Activated T-helper 1 cell treated with anti-CD3 and anti-CD28 coated beads, Interleukin-12 subunit alpha, Interleukin-12 subunit beta, Interleukin-2, Interleukin-4 antibody, amounts not matched to agents 30 ng/mL and 10 ng/mL and 1 ng/mL, durations not matched to agents 14 hours and 24 hours and 36 hours (primary cell): ENCODE measurements at regions of chr16 and their contacts with region 1.

Region 1: DNA sequence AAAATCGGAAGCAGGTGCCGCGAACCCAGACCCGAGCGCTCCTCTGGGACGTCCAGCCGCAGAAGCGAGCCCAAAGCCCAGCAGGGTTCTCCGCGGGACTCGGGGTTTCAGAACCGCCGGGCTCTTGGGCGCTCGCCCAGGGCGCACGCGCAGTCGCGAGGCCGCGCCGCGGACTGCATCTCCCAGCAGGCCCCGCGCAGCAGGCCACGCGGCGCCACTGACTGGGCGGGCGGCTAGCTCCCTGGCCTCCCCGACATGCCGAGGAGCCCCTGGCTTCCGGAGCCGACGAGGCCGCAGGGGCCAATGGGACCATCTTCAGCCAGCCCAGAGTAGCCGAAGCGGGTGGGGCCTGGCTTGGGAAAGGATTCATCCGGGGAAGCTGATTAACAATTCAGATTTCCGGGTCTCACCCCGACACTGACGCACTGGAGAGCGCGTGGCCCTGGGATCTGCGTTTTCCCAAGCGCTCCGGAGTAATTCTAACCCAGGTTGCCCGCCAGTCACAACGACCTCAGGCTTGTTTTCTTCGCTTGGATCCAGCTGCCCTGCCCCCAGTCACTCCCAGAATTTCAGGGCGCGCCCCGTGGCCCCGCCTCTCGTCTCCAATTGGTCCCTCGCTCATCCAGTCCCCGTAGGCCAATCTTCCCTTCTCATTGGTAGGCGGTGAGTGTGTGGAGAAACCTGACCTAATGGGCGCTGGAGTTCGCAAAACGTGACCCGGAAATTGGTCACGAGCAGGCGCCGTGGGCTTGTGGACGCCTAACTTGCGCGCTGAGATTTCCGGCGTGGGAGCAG is at the start of gene ZNF263:
- DNase-seq: peak; percentile 90
- H3K4me3 Mint-ChIP-seq: peak within 1 kb of the TSS; percentile 96
- H3K27ac Mint-ChIP-seq: peak within 1 kb of the TSS; percentile 97
- H3K4me1 Mint-ChIP-seq: peaks cover 23% of the 10 kb centered on the region
- H3K27me3 Mint-ChIP-seq: no peaks in the 10 kb centered on the region
- total RNA-seq, gene ZNF263: 25.5 and 27.8 TPM in 2 replicates

Region 2: GRCh38 chr16:3150346-3151218 is 132.3 kb before region 1 on chr16:
- intact Hi-C with region 1: loop called (anchors 1 kb)
- DNase-seq: peak; percentile 98
- H3K4me3 Mint-ChIP-seq: peak overlapping the region; percentile 85
- H3K27ac Mint-ChIP-seq: peak overlapping the region; percentile 93
- H3K4me1 Mint-ChIP-seq: peaks cover 33% of the 10 kb centered on the region
- H3K27me3 Mint-ChIP-seq: peaks cover 10% of the 10 kb centered on the region

Region 3: GRCh38 chr16:3188925-3189825 is 93.8 kb before region 1 on chr16:
- intact Hi-C with region 1: loop called (anchors 5 kb)
- DNase-seq: no peak
- H3K4me3 Mint-ChIP-seq: peak overlapping the region; percentile 73
- H3K27ac Mint-ChIP-seq: peak overlapping the region; percentile 85
- H3K4me1 Mint-ChIP-seq: peaks cover 44% of the 10 kb centered on the region
- H3K27me3 Mint-ChIP-seq: peaks cover 46% of the 10 kb centered on the region

Region 4: DNA sequence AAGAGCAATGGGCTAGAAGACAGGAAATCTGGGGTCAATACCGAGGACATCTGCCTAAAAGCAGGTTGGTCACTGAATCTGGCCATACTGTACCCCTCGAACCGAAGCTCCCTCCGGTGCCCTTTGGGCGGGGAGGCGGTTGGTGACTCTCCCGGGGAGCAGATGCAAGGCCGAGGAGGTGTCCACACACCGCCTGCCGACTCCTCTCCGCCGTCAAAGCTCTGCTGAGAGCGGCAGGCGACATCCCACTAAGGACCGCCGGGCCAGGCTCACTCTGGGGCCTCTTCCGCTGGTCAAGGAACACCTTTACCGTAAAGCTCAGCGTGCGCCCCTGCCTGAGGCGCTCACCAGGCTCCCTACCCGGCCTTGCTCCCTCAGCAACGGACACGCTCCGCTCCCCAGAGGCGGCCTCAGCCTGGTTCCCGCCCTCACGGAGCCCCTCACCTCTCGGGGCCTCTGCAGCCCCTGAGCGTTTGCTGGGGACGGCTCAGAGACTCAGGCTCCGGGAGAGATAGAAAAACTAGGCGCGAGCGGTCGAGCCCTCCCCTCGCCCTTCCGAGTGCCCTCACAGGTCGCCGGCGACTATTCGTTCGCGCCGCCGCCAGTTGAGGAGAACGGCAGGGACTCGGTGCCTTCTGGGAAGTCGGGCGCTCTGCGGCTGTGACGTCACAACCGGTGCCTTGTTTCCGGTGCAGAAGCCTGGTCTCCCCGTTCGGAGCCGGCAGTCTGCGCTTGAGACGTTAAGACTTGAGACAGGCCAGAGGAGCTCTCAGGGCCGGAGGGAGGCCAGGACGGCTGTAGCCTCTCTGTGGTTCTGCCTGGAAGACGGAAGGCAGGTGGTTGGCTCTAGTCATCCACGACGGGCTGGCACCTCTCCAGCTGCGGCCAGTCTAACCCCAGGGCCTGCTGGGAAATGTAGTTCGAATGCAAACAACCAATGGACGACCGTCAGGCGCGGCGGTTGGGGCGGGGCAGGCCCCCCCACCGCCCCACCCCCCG is 48.1 kb before region 1 on chr16 and contains the start of gene ZNF200:
- intact Hi-C with region 1: loop called (anchors 1 kb)
- DNase-seq: peak; percentile 91
- H3K4me3 Mint-ChIP-seq: peak within 1 kb of the TSS; percentile 94
- H3K27ac Mint-ChIP-seq: peak within 1 kb of the TSS; percentile 94
- H3K4me1 Mint-ChIP-seq: peaks cover 15% of the 10 kb centered on the region
- H3K27me3 Mint-ChIP-seq: no peaks in the 10 kb centered on the region
- total RNA-seq, gene ZNF200: 13.6 and 15.8 TPM in 2 replicates

Region 5: GRCh38 chr16:3305109-3306068 is 22.5 kb after region 1 on chr16 and contains the starts of genes TIGD7 and ZNF75A:
- intact Hi-C with region 1: loop called (anchors 1 kb)
- DNase-seq: peak; percentile 79
- H3K4me3 Mint-ChIP-seq: peak within 1 kb of the TSS; percentile 75
- H3K27ac Mint-ChIP-seq: peak within 1 kb of the TSS; percentile 70
- H3K4me1 Mint-ChIP-seq: peaks cover 8% of the 10 kb centered on the region
- H3K27me3 Mint-ChIP-seq: no peaks in the 10 kb centered on the region
- total RNA-seq, gene TIGD7: 2.0 and 3.1 TPM in 2 replicates
- total RNA-seq, gene ZNF75A: 26.5 and 27.6 TPM in 2 replicates

Region 6: DNA sequence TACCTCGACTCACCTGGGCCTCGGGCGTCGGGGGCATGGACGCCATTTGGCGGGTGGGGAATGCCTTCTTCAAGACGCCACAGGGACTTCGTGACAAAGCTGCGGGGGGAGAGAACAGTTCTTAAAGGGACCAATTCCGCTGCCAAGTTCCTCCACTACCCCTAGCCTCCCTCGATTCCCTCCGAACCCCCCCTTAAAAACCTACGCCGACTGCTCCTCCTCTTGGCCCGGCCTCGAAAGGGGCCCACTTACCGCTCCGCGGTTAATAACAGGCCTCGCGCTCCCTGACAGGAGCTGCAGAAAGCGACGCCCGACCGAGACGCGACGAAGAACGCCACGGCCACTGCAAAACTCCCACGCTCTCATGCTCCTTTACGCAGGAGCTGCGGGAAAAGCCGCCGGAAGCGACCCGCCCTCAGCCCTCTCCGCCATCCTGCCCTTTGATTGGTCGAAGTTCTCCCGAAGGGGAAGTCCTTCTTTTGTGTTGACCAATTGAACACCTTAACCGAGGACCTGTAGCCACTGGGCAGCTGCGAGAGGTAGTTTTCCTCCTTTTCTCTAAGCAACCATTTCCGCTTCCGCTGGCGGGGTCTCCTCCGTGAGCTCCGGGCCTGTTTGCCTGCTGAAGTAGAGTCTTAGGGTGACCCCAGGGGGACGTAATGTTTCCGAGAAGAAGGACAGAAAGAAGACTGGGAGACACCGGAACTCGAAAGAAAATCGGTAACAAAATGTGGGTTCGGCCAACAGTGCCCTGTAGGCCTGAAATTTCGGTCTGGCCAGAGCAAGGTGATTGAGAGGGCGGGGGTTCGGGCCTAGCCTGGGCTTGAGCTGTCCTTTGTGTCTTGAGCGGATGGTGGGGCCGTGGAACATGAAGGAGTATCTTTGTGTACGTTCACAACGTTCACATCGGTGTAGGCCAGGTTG is 160.4 kb after region 1 on chr16 and contains the starts of genes NAA60 and ZNF597:
- intact Hi-C with region 1: loop called (anchors 2 kb)
- DNase-seq: peak; percentile 79
- H3K4me3 Mint-ChIP-seq: peak within 1 kb of the TSS; percentile 99
- H3K27ac Mint-ChIP-seq: peak within 1 kb of the TSS; percentile 98
- H3K4me1 Mint-ChIP-seq: peaks cover 15% of the 10 kb centered on the region
- H3K27me3 Mint-ChIP-seq: no peaks in the 10 kb centered on the region
- total RNA-seq, gene NAA60: 35.4 and 38.3 TPM in 2 replicates
- total RNA-seq, gene ZNF597: 2.6 TPM in 2 replicates

Region 7: GRCh38 chr16:3457434-3458252 is 174.7 kb after region 1 on chr16:
- intact Hi-C with region 1: loop called (anchors 1 kb)
- DNase-seq: peak; percentile 88
- H3K4me3 Mint-ChIP-seq: peak overlapping the region; percentile 83
- H3K27ac Mint-ChIP-seq: peak overlapping the region; percentile 77
- H3K4me1 Mint-ChIP-seq: peaks cover 42% of the 10 kb centered on the region
- H3K27me3 Mint-ChIP-seq: no peaks in the 10 kb centered on the region